CD8-positive, alpha-beta T cell (primary cell): ENCODE measurements at regions of chr6 and their contacts with region 1.

Region 1: DNA sequence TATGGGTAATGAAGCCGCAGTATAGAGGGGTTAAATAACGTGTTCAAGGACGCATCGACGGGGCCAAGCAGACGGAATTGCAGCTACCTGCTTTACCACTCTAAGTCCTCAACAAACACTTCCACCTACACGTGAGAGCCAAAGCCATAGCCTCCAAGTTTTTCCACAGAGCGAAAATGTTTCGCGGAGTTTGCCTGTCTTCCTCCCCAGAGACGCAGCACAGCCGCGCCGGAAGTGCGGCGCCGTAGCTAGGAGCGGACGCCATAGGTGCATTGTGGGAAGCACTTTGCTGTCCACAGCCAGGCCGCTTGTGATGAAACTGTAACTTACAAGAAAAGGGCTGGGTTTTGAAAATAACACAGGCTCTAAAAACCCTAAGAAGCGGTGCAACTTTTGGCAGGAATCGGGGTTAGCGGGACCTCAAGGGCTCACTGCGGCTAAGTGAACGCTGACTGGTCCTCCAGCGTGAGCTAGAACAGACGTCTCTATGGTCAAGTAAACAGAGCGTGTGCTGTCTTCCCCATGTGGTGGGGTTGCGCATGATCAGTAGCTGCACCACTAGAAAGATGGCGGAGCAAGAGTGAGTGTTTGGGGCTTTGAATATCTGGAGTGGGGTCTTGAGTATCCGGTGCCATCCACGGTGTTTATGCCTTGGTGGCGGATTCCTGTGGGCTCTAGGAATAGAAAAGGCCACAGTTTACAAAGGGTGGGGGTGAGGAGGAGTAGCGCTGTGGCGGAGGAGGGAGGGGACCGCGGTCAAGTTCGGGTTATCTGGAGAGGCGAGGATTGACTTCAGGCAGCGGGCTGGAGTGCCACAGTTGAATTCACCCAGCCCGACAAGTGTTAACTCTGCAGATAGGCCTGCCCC is at the start of gene RPL7L1:
- DNase-seq: peak; percentile 69 to 93 (median 82)
- ATAC-seq: peak; percentile 92
- H3K4me3 ChIP-seq: peak within 1 kb of the TSS; percentile 71 to 83
- H3K4me3 Mint-ChIP-seq: peak within 1 kb of the TSS; percentile 98
- H3K27ac ChIP-seq: peak within 1 kb of the TSS; percentile 92 to 94
- H3K27ac Mint-ChIP-seq: peak within 1 kb of the TSS; percentile 99
- H3K4me1 ChIP-seq: peaks cover 19% of the 10 kb centered on the region
- H3K4me1 Mint-ChIP-seq: peaks cover 27% of the 10 kb centered on the region
- H3K27me3 ChIP-seq: no peaks in the 10 kb centered on the region
- H3K27me3 Mint-ChIP-seq: no peaks in the 10 kb centered on the region
- CTCF ChIP-seq: no peak
- total RNA-seq, gene RPL7L1: 67.9 to 68.6 TPM

Region 2: DNA sequence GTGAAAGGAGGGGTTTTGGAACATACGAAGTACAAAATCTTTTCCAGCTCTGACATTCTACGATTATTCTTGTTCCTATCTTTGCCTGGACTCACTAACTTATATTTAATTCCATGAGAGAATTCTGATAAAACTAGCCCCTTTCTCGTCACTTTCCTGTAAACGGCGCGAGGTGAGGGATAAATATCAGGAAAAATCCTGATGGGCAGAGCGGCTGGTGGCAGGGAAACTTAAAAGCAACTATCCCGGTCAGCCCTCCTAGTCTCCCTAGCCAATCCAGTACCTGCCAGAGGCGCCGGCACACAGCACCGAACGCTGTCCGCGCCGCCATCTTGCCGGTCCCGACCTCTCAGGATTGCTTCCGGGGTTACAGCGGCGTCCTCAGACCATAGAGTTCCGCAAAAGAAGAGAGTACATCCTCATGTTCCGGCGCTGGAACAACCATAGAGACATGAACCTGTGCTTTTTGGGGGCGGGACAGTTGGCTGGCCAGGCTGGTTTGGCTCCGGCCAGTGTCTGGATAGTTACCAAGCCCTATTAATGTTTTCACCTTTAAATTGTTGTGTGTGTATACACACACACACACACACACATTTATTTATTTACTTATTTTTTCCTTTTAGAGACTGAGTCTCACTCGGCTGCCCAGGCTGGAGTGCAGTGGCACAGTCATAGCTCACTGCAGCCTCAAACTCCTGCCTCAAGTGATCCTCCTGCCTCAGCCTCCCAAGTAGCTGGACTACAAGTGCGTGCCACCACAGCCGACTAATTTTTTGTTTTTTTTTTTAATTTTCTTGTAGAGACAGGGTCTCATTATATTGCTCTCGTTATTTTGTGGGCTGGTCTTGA is 661.9 kb before region 1 on chr6 and contains the start of gene MRPS10:
- CTCF ChIA-PET with region 1: no interaction called
- POLR2A ChIA-PET with region 1: no interaction called
- intact Hi-C with region 1: loop called in 1 of 2 experiments (anchors 1 kb)
- DNase-seq: peak; percentile 81 to 95 (median 91)
- ATAC-seq: peak; percentile 99
- H3K4me3 ChIP-seq: peak within 1 kb of the TSS; percentile 70 to 93
- H3K4me3 Mint-ChIP-seq: peak within 1 kb of the TSS; percentile 99
- H3K27ac ChIP-seq: peak within 1 kb of the TSS; percentile 63 to 74
- H3K27ac Mint-ChIP-seq: peak within 1 kb of the TSS; percentile 97
- H3K4me1 ChIP-seq: peaks cover 8% of the 10 kb centered on the region
- H3K4me1 Mint-ChIP-seq: peaks cover 25% of the 10 kb centered on the region
- H3K27me3 ChIP-seq: no peaks in the 10 kb centered on the region
- H3K27me3 Mint-ChIP-seq: no peaks in the 10 kb centered on the region
- CTCF ChIP-seq: no peak
- total RNA-seq, gene MRPS10: 17.0 to 17.4 TPM

Region 3: DNA sequence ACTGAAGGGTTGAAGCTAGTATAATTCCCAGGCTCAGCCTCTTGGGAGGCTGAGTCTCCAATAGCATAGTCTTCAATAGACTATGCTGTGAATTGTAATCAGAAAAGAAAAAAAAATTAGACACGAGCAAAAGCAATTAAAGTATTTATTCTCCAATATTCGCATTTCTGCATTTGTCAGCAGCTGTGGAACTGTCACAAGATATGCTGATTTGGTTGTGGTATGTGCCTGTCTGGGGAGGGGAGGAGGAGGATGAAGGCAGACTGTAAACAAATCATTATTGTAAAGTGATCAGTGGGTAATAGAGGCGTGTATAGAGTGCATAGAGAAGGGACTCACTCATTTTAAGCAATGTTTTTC is 107.9 kb before region 1 on chr6:
- CTCF ChIA-PET with region 1: interaction called, 4 read pairs
- POLR2A ChIA-PET with region 1: interaction called, 34 read pairs
- intact Hi-C with region 1: loop called in 1 of 2 experiments (anchors 1 kb)
- DNase-seq: peak in 5 of 9 experiments; percentile 34 to 83 (median 57)
- ATAC-seq: peak; percentile 21
- H3K4me3 ChIP-seq: peak overlapping the region; percentile 22 to 24
- H3K4me3 Mint-ChIP-seq: peak overlapping the region; percentile 70
- H3K27ac ChIP-seq: peak overlapping the region; percentile 81 to 98
- H3K27ac Mint-ChIP-seq: peak overlapping the region; percentile 100
- H3K4me1 ChIP-seq: peaks cover 67% of the 10 kb centered on the region
- H3K4me1 Mint-ChIP-seq: peaks cover 72% of the 10 kb centered on the region
- H3K27me3 ChIP-seq: no peaks in the 10 kb centered on the region
- H3K27me3 Mint-ChIP-seq: no peaks in the 10 kb centered on the region
- CTCF ChIP-seq: no peak

Region 4: GRCh38 chr6:42890311-42891198 is 10.9 kb after region 1 on chr6:
- CTCF ChIA-PET with region 1: interaction called, 7 read pairs
- POLR2A ChIA-PET with region 1: interaction called, 18 read pairs
- intact Hi-C with region 1: loop called (anchors 1 kb)
- DNase-seq: peak; percentile 77 to 94 (median 90)
- ATAC-seq: peak; percentile 95
- H3K4me3 ChIP-seq: peak overlapping the region; percentile 92 to 99
- H3K4me3 Mint-ChIP-seq: peak overlapping the region; percentile 92
- H3K27ac ChIP-seq: peak overlapping the region; percentile 91
- H3K27ac Mint-ChIP-seq: peak overlapping the region; percentile 95
- H3K4me1 ChIP-seq: peaks cover 10% of the 10 kb centered on the region
- H3K4me1 Mint-ChIP-seq: peaks cover 19% of the 10 kb centered on the region
- H3K27me3 ChIP-seq: no peaks in the 10 kb centered on the region
- H3K27me3 Mint-ChIP-seq: no peaks in the 10 kb centered on the region
- CTCF ChIP-seq: no peak

Region 5: DNA sequence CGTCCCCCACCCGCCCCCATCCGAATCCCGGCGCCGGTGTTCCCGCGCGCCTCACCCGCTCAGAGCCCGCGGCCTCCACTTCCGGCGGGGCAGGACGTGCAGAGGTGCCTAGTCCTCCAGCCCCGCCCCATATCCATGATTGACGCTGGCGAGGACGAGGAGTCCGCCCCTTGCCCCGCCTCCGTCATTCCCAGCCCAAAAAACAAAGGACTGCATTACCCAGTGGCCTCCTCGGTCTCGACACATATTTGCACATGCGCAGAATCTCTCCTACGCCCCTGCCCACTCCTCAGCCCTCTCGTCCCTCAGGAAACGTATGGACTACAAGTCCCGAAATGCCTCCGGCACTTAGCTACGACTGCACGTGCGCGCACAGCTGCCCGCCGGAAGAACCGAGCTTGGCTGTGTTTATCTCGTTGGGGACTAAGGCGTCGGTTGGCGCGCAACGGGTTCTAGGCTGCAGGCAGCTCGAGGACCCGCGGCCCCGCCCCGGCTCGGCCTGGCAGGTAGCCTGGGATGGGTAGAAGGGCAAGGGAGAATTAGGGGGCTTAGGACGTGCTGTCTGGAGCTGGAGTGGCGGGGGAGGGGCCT is 134.3 kb after region 1 on chr6 and contains the starts of genes KLHDC3 and MEA1:
- CTCF ChIA-PET with region 1: no interaction called
- POLR2A ChIA-PET with region 1: interaction called, 4 read pairs
- intact Hi-C with region 1: loop called in 1 of 2 experiments (anchors 1 kb)
- DNase-seq: peak; percentile 95 to 100 (median 98)
- ATAC-seq: peak; percentile 96
- H3K4me3 ChIP-seq: peak within 1 kb of the TSS; percentile 79 to 84
- H3K4me3 Mint-ChIP-seq: peak within 1 kb of the TSS; percentile 95
- H3K27ac ChIP-seq: peak within 1 kb of the TSS; percentile 60 to 74
- H3K27ac Mint-ChIP-seq: peak within 1 kb of the TSS; percentile 94
- H3K4me1 ChIP-seq: peaks cover 29% of the 10 kb centered on the region
- H3K4me1 Mint-ChIP-seq: peaks cover 63% of the 10 kb centered on the region
- H3K27me3 ChIP-seq: no peaks in the 10 kb centered on the region
- H3K27me3 Mint-ChIP-seq: no peaks in the 10 kb centered on the region
- CTCF ChIP-seq: no peak
- total RNA-seq, gene KLHDC3: 20.9 to 21.7 TPM
- total RNA-seq, gene MEA1: 14.5 to 15.3 TPM